GM13977 (cell line): ENCODE measurements at regions of chr12 and their contacts with region 1.

Region 1: GRCh38 chr12:64544371-64545080 is 65.8 kb upstream of the RASSF3 start:
- DNase-seq: no peak
- CTCF ChIP-seq: no peak

Region 2: GRCh38 chr12:64699504-64700115 is 155.1 kb after region 1 on chr12:
- in situ Hi-C with region 1: loop called (anchors 5 kb)
- DNase-seq: no peak
- CTCF ChIP-seq: no peak